Left ventricle myocardium superior (tissue), 1 donor: ENCODE measurements at regions of chr2 and their contacts with region 1.

Region 1: GRCh38 chr2:42095923-42096408 is 48.1 kb downstream of the PKDCC start:
- DNase-seq: peak; percentile 81
- ATAC-seq: peak; percentile 64

Region 2: GRCh38 chr2:41600460-41600859 is 495.5 kb before region 1 on chr2:
- intact Hi-C with region 1: no loop called
- DNase-seq: no peak
- ATAC-seq: no peak

Region 3: DNA sequence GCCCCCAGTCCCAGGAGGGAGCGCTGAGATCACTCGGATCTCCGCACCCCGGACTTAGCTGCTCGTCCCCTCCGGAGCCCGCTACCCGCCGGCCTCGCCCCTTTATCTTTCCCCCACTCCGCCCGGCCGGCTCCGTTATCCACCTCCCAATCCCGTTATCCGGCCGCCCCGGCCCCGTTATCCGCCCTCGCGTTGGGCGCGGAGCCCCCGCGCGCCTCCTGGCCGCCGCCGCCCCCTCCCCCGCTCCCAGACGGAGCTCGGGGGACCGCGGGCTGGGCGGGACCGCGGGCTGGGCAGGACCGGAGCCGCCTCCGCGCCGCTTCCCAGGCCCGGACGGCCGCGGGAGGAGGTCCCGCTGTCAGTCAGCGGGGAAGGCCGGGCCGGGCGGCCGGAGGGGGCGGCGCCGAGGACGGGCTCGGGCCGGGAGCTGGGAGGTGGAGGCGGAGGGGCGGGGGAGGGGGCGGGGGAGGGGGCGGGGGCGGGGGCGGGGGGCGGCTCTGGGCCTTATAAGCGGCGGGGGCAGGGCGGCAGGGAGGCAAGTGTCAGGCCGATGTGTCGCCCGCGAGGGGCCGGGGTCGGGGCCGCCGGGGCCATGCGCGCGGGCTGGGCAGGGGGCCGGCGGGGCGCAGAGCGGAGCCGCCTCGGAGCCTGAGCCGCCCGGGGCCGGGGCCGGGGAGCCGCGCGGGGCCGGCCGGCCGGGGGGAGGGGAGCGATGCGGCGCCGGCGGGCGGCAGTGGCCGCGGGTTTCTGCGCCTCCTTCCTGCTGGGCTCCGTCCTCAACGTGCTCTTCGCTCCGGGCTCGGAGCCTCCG is 48.3 kb before region 1 on chr2 and contains the start of gene PKDCC:
- intact Hi-C with region 1: no loop called
- DNase-seq: peak; percentile 94
- ATAC-seq: peak; percentile 87
- total RNA-seq, gene PKDCC: 77.1 TPM

Region 4: DNA sequence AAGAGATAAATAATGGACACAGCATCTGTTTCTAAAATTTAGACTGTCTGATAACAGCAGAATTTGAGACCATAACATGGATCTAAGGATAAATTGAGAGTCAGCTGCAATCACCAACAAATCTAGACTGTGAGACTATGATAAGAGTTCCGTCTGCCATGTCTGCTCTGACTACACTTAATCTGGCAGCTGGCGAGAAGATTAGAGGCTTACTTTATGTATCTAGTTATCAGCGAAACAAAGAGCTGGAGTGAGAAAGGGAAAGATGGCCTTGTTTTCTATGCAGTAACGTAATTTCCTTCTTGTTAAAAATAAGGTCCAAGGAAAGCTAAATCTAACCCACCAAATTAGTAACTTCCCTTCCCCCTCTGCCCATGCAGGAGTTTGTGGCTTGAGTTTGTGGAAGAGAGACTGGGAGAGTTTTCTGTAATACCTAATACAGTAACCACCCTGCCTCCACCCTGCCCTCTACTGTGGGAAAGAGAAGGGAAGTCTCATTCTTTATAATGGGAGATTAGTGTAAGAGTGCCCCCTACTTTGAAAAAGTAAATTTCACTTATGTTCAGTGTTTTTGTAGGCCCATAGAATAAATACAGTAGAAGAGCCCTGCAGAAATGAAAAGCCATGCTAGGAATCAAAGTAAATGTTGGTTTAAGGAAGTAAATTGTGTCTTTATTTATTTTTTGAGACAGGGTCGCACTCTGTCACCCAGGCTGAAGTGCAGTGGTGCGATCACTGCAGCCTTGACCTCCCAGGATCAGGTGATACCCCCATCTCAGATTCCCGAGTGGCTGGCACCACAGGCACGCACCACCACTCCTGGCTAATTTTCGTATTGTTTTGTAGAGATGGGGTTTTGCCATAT is 100.7 kb after region 1 on chr2:
- intact Hi-C with region 1: loop called (anchors 5 kb)
- DNase-seq: no peak
- ATAC-seq: peak; percentile 73

Region 5: DNA sequence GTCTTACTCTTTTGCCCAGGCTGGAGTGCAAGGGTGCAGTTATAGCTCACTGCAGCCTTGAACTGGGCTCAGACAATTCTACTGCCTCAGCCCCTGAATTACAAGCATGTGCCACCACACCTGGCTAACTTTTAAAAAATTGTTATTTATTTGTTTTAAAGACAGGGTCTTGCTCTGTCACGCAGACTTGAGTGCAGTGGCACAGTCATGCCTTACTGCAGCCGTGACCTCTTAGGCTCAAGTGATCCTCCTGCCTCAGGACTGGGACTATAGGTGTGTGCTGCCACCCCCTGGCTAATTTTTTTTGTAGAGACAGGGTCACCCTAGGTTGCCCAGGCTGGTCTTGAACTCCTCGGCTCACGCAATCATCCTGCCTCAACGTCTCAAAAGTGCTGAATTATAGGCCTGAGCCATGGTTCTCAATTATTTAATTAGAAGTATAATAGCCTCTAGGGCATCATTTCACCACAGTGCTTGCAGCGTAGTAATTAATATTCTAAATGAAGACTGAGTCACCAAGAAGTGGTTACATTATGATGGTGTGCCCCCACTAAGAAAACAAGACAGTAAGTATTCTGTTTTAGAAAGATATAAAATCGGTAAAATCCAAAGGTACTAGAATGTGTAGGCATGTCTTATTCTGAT is 142.8 kb after region 1 on chr2:
- intact Hi-C with region 1: loop called (anchors 5 kb)
- DNase-seq: peak; percentile 36
- ATAC-seq: peak; percentile 92

Region 6: GRCh38 chr2:42328148-42328833 is 232.3 kb after region 1 on chr2:
- intact Hi-C with region 1: loop called (anchors 10 kb)
- DNase-seq: no peak
- ATAC-seq: no peak